ENCODE measurements at regions of chr9 and their contacts with region 1.

Region 1: GRCh38 chr9:125746017-125746773 is 978 bp upstream of the PBX3 start:
- DNase-seq: peak; percentile 88
- H3K4me3 Mint-ChIP-seq: peak overlapping the region; percentile 88
- H3K27ac Mint-ChIP-seq: peak overlapping the region; percentile 91
- H3K4me1 Mint-ChIP-seq: peaks cover 39% of the 10 kb centered on the region
- H3K27me3 Mint-ChIP-seq: peaks cover 25% of the 10 kb centered on the region

Region 2: DNA sequence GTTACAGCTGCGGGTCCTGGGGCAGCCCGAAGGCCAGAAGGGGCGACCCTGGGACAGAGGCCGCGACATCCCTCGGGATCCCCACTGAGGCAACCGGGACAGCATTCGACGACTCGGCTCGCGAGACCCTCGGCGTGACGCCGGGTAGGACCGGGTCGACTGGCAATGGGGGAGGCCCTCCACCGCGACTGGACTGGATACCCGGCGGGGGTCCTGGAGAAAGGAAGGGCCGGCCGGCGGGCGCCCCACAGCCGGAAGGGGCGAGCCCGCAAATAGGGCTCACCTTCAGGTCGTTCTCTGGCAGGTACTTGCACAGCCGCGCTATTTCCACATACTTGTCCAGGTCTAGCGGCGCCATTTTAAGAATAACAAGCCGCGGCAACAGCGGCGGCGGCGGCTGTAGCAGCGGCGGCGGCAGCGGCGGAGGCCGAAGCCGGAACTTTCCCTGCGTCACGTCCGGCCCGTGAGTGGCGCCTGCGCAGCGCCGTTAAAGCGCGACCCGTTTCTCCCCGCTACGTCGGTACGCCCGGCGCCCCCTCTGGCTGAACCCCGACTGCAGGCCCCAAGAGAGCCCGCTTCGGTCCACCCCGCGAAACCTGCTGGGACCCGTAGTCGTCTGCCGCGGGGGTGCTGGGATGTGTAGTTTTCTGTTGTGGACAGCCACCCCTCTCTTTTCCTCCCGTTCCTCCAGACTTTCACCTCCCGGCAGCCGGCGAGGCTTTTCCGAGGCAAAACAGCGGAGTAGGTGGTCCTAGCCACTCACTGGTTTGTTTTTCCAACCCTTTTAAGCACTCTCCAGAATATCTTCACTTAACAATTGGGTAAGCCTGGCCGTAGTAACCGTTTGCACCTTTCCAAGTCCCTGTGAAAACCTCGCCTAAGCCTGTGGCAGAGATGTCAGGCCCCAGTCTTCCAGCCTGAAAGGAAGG is 556.6 kb before region 1 on chr9 and contains the start of gene PPP6C:
- intact Hi-C with region 1: loop called (anchors 1 kb)
- DNase-seq: peak; percentile 96
- H3K4me3 Mint-ChIP-seq: peak within 1 kb of the TSS; percentile 96
- H3K27ac Mint-ChIP-seq: peak within 1 kb of the TSS; percentile 88
- H3K4me1 Mint-ChIP-seq: peaks cover 33% of the 10 kb centered on the region
- H3K27me3 Mint-ChIP-seq: no peaks in the 10 kb centered on the region
- total RNA-seq, gene PPP6C: 47.2 and 50.8 TPM in 2 replicates

Region 3: DNA sequence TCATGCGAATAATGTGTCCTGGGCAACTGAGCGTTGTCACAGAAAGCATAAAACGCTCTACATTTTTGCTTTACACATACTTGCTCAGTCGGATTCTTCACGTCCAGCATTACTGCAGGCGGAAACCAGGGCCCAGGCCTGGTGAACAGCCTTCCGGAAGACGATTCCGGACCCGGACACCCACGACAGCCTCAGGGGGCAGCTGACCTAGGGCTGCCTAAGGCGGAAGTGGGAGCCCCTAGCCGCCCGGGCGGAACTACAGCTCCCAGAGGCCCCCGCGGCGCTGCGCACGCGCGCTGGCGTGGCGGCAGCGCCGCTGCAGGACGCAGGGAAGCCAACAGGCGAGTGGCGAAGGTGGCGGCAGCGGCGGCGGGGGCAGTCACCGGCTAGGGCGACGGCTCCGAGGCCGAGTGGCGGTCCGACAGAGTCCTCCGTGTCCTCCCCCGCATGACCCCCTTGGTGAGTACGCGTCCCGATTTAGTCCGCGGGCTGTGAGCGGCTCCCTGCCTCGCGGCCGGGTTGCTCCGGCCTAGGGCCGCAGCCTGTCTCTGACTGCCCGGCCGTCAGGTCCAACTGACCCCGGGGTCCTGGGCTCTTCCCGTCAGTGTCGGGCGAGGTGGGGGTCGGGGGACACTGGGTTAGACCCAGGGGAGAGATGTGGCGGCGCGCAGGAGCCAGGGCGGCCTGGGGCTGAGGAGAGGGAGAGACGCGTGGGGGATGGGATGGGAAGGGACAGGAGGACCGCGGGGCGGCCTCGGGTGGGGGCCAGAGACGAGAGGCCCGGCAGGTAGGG is 484.5 kb before region 1 on chr9 and contains the start of gene GAPVD1:
- intact Hi-C with region 1: loop called (anchors 5 kb)
- DNase-seq: peak; percentile 88
- H3K4me3 Mint-ChIP-seq: peak within 1 kb of the TSS; percentile 99
- H3K27ac Mint-ChIP-seq: peak within 1 kb of the TSS; percentile 93
- H3K4me1 Mint-ChIP-seq: peaks cover 42% of the 10 kb centered on the region
- H3K27me3 Mint-ChIP-seq: no peaks in the 10 kb centered on the region
- total RNA-seq, gene GAPVD1: 53.6 and 56.8 TPM in 2 replicates

Region 4: GRCh38 chr9:125521462-125522327 is 224.5 kb before region 1 on chr9:
- intact Hi-C with region 1: loop called (anchors 5 kb)
- DNase-seq: peak; percentile 38
- H3K4me3 Mint-ChIP-seq: peak overlapping the region; percentile 61
- H3K27ac Mint-ChIP-seq: peak overlapping the region; percentile 91
- H3K4me1 Mint-ChIP-seq: peaks cover 33% of the 10 kb centered on the region
- H3K27me3 Mint-ChIP-seq: no peaks in the 10 kb centered on the region

Region 5: DNA sequence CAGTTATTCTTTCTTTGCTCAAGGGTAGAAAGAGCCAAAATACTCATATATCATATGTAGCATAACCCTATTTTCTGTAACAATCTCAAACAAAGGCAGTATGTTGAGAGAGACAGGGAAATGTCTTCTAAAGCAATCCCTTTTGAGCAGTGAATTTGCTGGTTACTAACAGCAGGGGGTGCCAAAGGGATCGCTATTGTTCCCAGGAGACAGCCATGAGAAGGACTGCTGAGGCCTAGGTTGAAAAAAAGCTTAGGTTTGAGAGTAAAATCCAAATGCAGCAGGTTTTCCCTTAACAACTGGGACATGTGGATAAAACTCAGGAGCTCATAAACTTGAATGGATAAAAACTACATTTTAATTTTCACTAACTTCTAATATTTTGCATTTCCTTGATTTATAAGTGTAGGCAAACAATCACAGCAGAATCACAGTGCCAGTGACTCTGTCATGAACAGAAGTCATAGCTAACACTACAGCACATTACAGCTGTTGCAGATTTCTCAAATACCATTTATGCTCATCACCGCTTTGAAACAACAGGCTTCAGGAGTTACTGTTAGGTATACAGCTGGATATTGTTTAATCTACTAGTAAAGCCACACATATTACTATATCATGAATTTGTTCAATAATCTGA is 187.6 kb before region 1 on chr9:
- intact Hi-C with region 1: loop called (anchors 5 kb)
- DNase-seq: peak; percentile 31
- H3K4me3 Mint-ChIP-seq: no peak overlapping the region
- H3K27ac Mint-ChIP-seq: no peak overlapping the region
- H3K4me1 Mint-ChIP-seq: peaks cover 18% of the 10 kb centered on the region
- H3K27me3 Mint-ChIP-seq: no peaks in the 10 kb centered on the region

Region 6: GRCh38 chr9:125650271-125650737 is 95.9 kb before region 1 on chr9:
- intact Hi-C with region 1: loop called (anchors 1 kb)
- DNase-seq: no peak
- H3K4me3 Mint-ChIP-seq: peak overlapping the region; percentile 54
- H3K27ac Mint-ChIP-seq: peak overlapping the region; percentile 85
- H3K4me1 Mint-ChIP-seq: peaks cover 71% of the 10 kb centered on the region
- H3K27me3 Mint-ChIP-seq: no peaks in the 10 kb centered on the region

Region 7: GRCh38 chr9:125706661-125707471 is 39.3 kb before region 1 on chr9 and contains the start of gene MAPKAP1:
- intact Hi-C with region 1: loop called (anchors 1 kb)
- DNase-seq: peak; percentile 93
- H3K4me3 Mint-ChIP-seq: peak within 1 kb of the TSS; percentile 79
- H3K27ac Mint-ChIP-seq: peak within 1 kb of the TSS; percentile 77
- H3K4me1 Mint-ChIP-seq: peaks cover 34% of the 10 kb centered on the region
- H3K27me3 Mint-ChIP-seq: no peaks in the 10 kb centered on the region
- total RNA-seq, gene MAPKAP1: 103 and 108 TPM in 2 replicates

Region 8: DNA sequence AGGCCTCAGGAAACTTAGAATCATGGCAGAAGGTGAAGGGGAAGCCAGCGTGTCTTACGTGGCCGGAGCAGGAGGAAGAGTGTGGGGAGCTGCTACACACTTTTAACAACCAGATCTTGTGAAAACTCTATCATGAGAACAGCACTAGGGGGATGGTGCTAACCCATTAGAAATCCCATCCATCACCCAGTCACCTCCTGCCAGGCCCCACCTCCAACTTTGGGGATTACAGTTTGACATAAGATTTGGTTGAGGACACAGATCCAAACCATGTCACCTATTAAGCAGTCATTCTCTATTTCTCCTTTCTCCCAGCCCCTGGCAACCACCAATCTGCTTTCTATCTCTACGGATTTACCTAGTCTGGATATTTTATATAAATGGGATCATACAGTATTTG is 27.9 kb after region 1 on chr9:
- intact Hi-C with region 1: no loop called
- DNase-seq: no peak
- H3K4me3 Mint-ChIP-seq: no peak overlapping the region
- H3K27ac Mint-ChIP-seq: no peak overlapping the region
- H3K4me1 Mint-ChIP-seq: no peaks in the 10 kb centered on the region
- H3K27me3 Mint-ChIP-seq: no peaks in the 10 kb centered on the region